CD4-positive, alpha-beta memory T cell (primary cell): ENCODE measurements at regions of chr7 and their contacts with region 1.

Region 1: GRCh38 chr7:154927624-154928143 is 75.2 kb downstream of the PAXIP1 start:
- DNase-seq: peak; percentile 76 to 84 (median 77)
- H3K4me3 ChIP-seq: peak overlapping the region; percentile 74 to 89
- H3K4me3 Mint-ChIP-seq: peak overlapping the region; percentile 91 to 98 (median 94)
- H3K27ac ChIP-seq: peak overlapping the region; percentile 85
- H3K27ac Mint-ChIP-seq: peak overlapping the region; percentile 95 to 99 (median 98)
- H3K4me1 ChIP-seq: peaks cover 25% of the 10 kb centered on the region
- H3K4me1 Mint-ChIP-seq: peaks cover 22 to 42% (median 32%) of the 10 kb centered on the region in 4 donors
- H3K27me3 ChIP-seq: no peaks in the 10 kb centered on the region
- H3K27me3 Mint-ChIP-seq: no peaks in the 10 kb centered on the region

Region 2: GRCh38 chr7:154867068-154867467 is 60.6 kb before region 1 on chr7:
- CTCF ChIA-PET with region 1: no interaction called
- POLR2A ChIA-PET with region 1: no interaction called
- intact Hi-C with region 1: no loop called
- DNase-seq: no peak
- H3K4me3 ChIP-seq: no peak overlapping the region
- H3K4me3 Mint-ChIP-seq: no peak overlapping the region
- H3K27ac ChIP-seq: no peak overlapping the region
- H3K27ac Mint-ChIP-seq: no peak overlapping the region
- H3K4me1 ChIP-seq: no peaks in the 10 kb centered on the region
- H3K4me1 Mint-ChIP-seq: peaks cover 0 to 2% (median 0%) of the 10 kb centered on the region in 4 donors
- H3K27me3 ChIP-seq: no peaks in the 10 kb centered on the region
- H3K27me3 Mint-ChIP-seq: peaks cover 6 to 31% of the 10 kb centered on the region in 2 donors

Region 3: DNA sequence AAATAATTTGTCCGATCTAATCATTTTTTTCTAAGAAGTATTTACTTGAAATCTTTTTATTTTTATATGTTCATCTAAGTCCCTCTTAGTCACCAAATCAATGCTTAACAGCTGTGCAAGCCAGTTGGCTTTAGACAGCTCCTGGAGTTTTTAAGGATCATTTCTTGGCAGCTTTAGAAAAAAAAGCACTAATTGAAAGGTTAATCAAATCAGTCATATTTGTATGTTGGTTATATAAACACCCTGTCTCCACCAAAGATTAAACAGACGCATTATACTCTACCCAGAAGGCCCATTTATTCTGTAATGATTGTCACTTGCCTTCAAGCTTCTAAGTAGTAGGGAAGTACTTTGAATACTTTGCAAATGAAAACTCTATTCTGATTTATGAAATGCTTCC is 15.0 kb after region 1 on chr7:
- CTCF ChIA-PET with region 1: interaction called, 115 read pairs
- POLR2A ChIA-PET with region 1: no interaction called
- intact Hi-C with region 1: no loop called
- DNase-seq: no peak
- H3K4me3 ChIP-seq: no peak overlapping the region
- H3K4me3 Mint-ChIP-seq: no peak overlapping the region
- H3K27ac ChIP-seq: no peak overlapping the region
- H3K27ac Mint-ChIP-seq: no peak overlapping the region
- H3K4me1 ChIP-seq: no peaks in the 10 kb centered on the region
- H3K4me1 Mint-ChIP-seq: peaks cover 0 to 6% (median 3%) of the 10 kb centered on the region in 4 donors
- H3K27me3 ChIP-seq: no peaks in the 10 kb centered on the region
- H3K27me3 Mint-ChIP-seq: no peaks in the 10 kb centered on the region

Region 4: GRCh38 chr7:155009570-155010157 is 82.0 kb after region 1 on chr7:
- CTCF ChIA-PET with region 1: interaction called, 72 read pairs
- POLR2A ChIA-PET with region 1: interaction called, 3 read pairs
- intact Hi-C with region 1: loop called (anchors 1 kb)
- DNase-seq: peak; percentile 10 to 42 (median 23)
- H3K4me3 ChIP-seq: no peak overlapping the region
- H3K4me3 Mint-ChIP-seq: no peak overlapping the region
- H3K27ac ChIP-seq: no peak overlapping the region
- H3K27ac Mint-ChIP-seq: no peak overlapping the region
- H3K4me1 ChIP-seq: peaks cover 4% of the 10 kb centered on the region
- H3K4me1 Mint-ChIP-seq: peaks cover 2 to 10% (median 6%) of the 10 kb centered on the region in 4 donors
- H3K27me3 ChIP-seq: no peaks in the 10 kb centered on the region
- H3K27me3 Mint-ChIP-seq: peaks cover 0 to 2% of the 10 kb centered on the region in 2 donors

Region 5: GRCh38 chr7:155043756-155044155 is 116.1 kb after region 1 on chr7:
- CTCF ChIA-PET with region 1: no interaction called
- POLR2A ChIA-PET with region 1: no interaction called
- intact Hi-C with region 1: no loop called
- DNase-seq: no peak
- H3K4me3 ChIP-seq: no peak overlapping the region
- H3K4me3 Mint-ChIP-seq: no peak overlapping the region
- H3K27ac ChIP-seq: no peak overlapping the region
- H3K27ac Mint-ChIP-seq: no peak overlapping the region
- H3K4me1 ChIP-seq: no peaks in the 10 kb centered on the region
- H3K4me1 Mint-ChIP-seq: no peaks in the 10 kb centered on the region
- H3K27me3 ChIP-seq: no peaks in the 10 kb centered on the region
- H3K27me3 Mint-ChIP-seq: peaks cover 20 to 22% of the 10 kb centered on the region in 2 donors

Region 6: GRCh38 chr7:155298834-155299534 is 371.3 kb after region 1 on chr7:
- CTCF ChIA-PET with region 1: interaction called, 14 read pairs
- POLR2A ChIA-PET with region 1: interaction called, 46 read pairs
- intact Hi-C with region 1: loop called (anchors 1 kb)
- DNase-seq: peak; percentile 95 to 99 (median 98)
- H3K4me3 ChIP-seq: peak overlapping the region; percentile 67 to 68
- H3K4me3 Mint-ChIP-seq: peak overlapping the region; percentile 90 to 96 (median 93)
- H3K27ac ChIP-seq: peak overlapping the region; percentile 87
- H3K27ac Mint-ChIP-seq: peak overlapping the region; percentile 92 to 99 (median 96)
- H3K4me1 ChIP-seq: peaks cover 44% of the 10 kb centered on the region
- H3K4me1 Mint-ChIP-seq: peaks cover 29 to 50% (median 36%) of the 10 kb centered on the region in 4 donors
- H3K27me3 ChIP-seq: no peaks in the 10 kb centered on the region
- H3K27me3 Mint-ChIP-seq: no peaks in the 10 kb centered on the region

Region 7: GRCh38 chr7:155584763-155585531 is 657.3 kb after region 1 on chr7:
- CTCF ChIA-PET with region 1: no interaction called
- POLR2A ChIA-PET with region 1: no interaction called
- intact Hi-C with region 1: no loop called
- DNase-seq: no peak
- H3K4me3 ChIP-seq: no peak overlapping the region
- H3K4me3 Mint-ChIP-seq: no peak overlapping the region
- H3K27ac ChIP-seq: no peak overlapping the region
- H3K27ac Mint-ChIP-seq: no peak overlapping the region
- H3K4me1 ChIP-seq: no peaks in the 10 kb centered on the region
- H3K4me1 Mint-ChIP-seq: peaks cover 0 to 5% (median 0%) of the 10 kb centered on the region in 4 donors
- H3K27me3 ChIP-seq: no peaks in the 10 kb centered on the region
- H3K27me3 Mint-ChIP-seq: peaks cover 14 to 26% of the 10 kb centered on the region in 2 donors

Region 8: GRCh38 chr7:155598810-155599210 is 671.1 kb after region 1 on chr7:
- CTCF ChIA-PET with region 1: interaction called, 8 read pairs
- POLR2A ChIA-PET with region 1: no interaction called
- intact Hi-C with region 1: loop called (anchors 1 kb)
- DNase-seq: peak; percentile 64 to 70 (median 64)
- H3K4me3 ChIP-seq: no peak overlapping the region
- H3K4me3 Mint-ChIP-seq: no peak overlapping the region
- H3K27ac ChIP-seq: no peak overlapping the region
- H3K27ac Mint-ChIP-seq: peak overlapping the region in 1 of 7 donors; percentile 35
- H3K4me1 ChIP-seq: no peaks in the 10 kb centered on the region
- H3K4me1 Mint-ChIP-seq: peaks cover 0 to 5% (median 3%) of the 10 kb centered on the region in 4 donors
- H3K27me3 ChIP-seq: no peaks in the 10 kb centered on the region
- H3K27me3 Mint-ChIP-seq: peaks cover 27 to 28% of the 10 kb centered on the region in 2 donors

Region 9: DNA sequence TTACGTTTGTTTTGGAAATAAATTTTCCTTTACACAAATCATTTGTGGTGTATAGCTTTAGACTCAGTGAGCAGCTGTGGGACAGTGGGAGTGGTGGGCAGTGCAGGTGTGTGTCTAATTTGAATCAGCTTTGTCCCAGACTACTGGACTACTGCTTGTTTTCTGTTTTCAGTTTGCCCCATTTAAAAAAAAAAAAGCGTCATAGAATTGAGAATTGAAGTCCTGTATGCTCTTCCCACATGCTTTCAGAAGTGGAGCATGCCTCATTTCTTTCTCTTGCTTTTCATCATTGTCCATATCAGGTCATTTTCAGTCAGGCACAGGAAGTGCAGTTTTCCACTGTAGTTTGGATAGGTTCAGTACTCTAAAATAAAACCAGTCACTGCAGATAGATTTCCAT is 818.5 kb after region 1 on chr7:
- CTCF ChIA-PET with region 1: no interaction called
- POLR2A ChIA-PET with region 1: no interaction called
- intact Hi-C with region 1: no loop called
- DNase-seq: no peak
- H3K4me3 ChIP-seq: no peak overlapping the region
- H3K4me3 Mint-ChIP-seq: no peak overlapping the region
- H3K27ac ChIP-seq: no peak overlapping the region
- H3K27ac Mint-ChIP-seq: peak overlapping the region in 1 of 7 donors; percentile 1
- H3K4me1 ChIP-seq: peaks cover 15% of the 10 kb centered on the region
- H3K4me1 Mint-ChIP-seq: peaks cover 28 to 82% (median 47%) of the 10 kb centered on the region in 4 donors
- H3K27me3 ChIP-seq: no peaks in the 10 kb centered on the region
- H3K27me3 Mint-ChIP-seq: no peaks in the 10 kb centered on the region

Region 10: GRCh38 chr7:156473476-156474240 is 1546.0 kb after region 1 on chr7:
- CTCF ChIA-PET with region 1: interaction called, 4 read pairs
- POLR2A ChIA-PET with region 1: no interaction called
- intact Hi-C with region 1: loop called (anchors 5 kb)
- DNase-seq: peak in 1 of 5 donors; percentile 4
- H3K4me3 ChIP-seq: no peak overlapping the region
- H3K4me3 Mint-ChIP-seq: no peak overlapping the region
- H3K27ac ChIP-seq: no peak overlapping the region
- H3K27ac Mint-ChIP-seq: no peak overlapping the region
- H3K4me1 ChIP-seq: no peaks in the 10 kb centered on the region
- H3K4me1 Mint-ChIP-seq: no peaks in the 10 kb centered on the region
- H3K27me3 ChIP-seq: no peaks in the 10 kb centered on the region
- H3K27me3 Mint-ChIP-seq: peaks cover 17 to 19% of the 10 kb centered on the region in 2 donors